ENCODE measurements at regions of chr7 and their contacts with region 1.

Region 1: DNA sequence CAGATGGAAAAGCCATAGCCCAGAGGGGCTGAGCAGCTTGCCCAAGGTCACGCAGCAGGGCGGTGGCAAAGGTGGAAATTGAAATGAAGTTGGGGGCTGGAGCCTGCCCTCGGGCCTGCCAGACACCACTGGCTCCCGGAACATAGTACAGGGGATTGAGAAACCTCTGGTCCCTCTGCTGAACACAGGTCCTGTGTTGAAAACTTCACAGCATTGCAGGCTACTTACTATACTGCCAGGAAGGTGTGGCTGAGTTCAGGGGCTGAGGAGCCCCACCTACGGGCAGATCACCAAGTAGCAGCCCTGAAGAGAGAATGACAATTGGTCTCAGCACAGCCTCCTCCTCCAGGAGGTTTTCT is 326.7 kb downstream of the PLXNA4 start:
- DNase-seq: peak; percentile 6
- H3K4me3 ChIP-seq: no peak overlapping the region
- H3K27ac ChIP-seq: no peak overlapping the region
- H3K4me1 ChIP-seq: peaks cover 18% of the 10 kb centered on the region
- H3K27me3 ChIP-seq: no peaks in the 10 kb centered on the region
- CTCF ChIP-seq: peak; percentile 27 to 56

Region 2: DNA sequence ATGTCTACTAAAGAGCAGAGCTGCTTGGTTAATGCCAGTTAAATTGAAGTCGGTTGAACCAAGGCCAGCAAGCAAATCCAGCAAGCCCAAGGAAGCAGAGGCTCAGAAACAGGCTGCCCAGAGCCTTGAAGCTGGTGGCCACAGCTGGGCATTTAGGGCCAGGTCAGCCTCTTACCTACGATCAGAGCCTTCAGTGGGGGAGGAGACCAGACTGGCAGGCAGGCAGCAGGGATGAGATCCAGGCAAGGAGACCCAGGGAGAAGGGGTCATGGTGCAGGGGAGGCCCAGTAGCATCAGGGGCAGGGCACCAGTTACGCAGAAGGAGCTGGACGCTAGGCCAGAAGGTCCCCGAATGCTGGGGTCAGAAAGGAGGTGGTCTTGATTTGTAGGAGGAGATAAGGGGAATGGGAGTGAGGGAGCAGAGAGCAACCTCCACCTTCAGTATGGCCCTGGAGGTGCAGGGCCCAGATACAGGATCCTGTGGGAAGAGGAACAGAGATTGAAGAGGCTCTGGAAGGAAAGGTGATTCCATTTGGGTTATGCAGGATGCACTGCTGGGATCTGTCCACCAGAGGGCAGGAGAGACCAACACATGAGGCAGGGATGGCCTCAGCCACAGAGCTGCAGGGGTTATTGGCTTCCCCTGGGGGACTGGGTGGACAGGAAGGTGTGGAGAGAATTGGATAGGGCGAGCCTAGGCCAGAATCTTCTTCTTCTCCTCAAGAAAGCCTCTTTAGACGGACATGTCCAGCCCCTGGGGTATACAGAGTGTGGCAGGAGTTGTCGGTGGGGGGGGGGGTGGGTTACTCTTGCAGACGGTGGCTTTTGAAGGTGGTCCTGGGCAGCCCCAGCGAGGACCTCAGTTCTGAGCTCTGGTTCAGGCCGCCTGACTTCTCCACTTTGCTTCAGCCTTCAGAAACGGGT is 560.6 kb before region 1 on chr7:
- CTCF ChIA-PET with region 1: no interaction called
- dilution Hi-C with region 1: no loop called
- in situ Hi-C with region 1: no loop called
- intact Hi-C with region 1: loop called (anchors 1 kb)
- DNase-seq: peak; percentile 31
- H3K4me3 ChIP-seq: no peak overlapping the region
- H3K27ac ChIP-seq: no peak overlapping the region
- H3K4me1 ChIP-seq: peaks cover 3% of the 10 kb centered on the region
- H3K27me3 ChIP-seq: no peaks in the 10 kb centered on the region
- CTCF ChIP-seq: peak; percentile 96

Region 3: GRCh38 chr7:131753620-131754222 is 495.9 kb before region 1 on chr7:
- CTCF ChIA-PET with region 1: no interaction called
- dilution Hi-C with region 1: no loop called
- in situ Hi-C with region 1: no loop called
- intact Hi-C with region 1: loop called (anchors 5 kb)
- DNase-seq: no peak
- H3K4me3 ChIP-seq: no peak overlapping the region
- H3K27ac ChIP-seq: no peak overlapping the region
- H3K4me1 ChIP-seq: no peaks in the 10 kb centered on the region
- H3K27me3 ChIP-seq: peaks cover 6% of the 10 kb centered on the region
- CTCF ChIP-seq: peak; percentile 36 to 78

Region 4: DNA sequence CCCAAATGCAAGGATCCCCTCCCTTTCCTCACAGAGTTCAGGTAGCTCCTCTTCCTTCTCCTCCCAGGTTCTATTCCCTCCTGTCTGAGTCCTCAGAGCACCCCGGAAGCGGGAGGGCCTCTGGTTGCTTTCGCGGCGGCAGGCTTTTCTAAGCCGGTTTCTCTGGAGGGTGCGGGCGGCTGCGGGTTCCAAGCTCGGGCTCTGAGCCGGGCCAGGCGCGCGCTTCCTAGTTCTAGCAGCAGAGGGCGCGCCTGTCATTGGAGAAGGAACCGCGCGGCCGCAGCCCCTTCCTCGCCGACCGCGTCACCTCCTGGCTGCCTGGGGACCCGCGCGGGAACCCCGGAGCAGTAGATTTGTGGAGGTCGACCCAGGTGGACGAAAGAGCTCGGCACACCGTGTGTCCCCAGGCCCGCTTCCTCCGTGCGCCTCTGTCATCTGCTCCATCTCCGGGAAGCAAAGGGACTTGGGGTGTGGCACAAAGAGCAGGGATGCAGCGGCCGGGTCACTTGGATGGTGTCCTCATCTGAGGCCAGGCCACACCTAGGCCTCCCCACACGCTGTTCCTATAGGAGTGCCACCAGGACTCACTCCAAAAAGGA is 304.2 kb before region 1 on chr7:
- CTCF ChIA-PET with region 1: no interaction called
- dilution Hi-C with region 1: no loop called
- in situ Hi-C with region 1: loop called (anchors 10 kb)
- intact Hi-C with region 1: loop called (anchors 1 kb)
- DNase-seq: peak; percentile 12
- H3K4me3 ChIP-seq: no peak overlapping the region
- H3K27ac ChIP-seq: no peak overlapping the region
- H3K4me1 ChIP-seq: peaks cover 5% of the 10 kb centered on the region
- H3K27me3 ChIP-seq: no peaks in the 10 kb centered on the region
- CTCF ChIP-seq: peak; percentile 50 to 86

Region 5: GRCh38 chr7:132049462-132050304 is 199.9 kb before region 1 on chr7:
- CTCF ChIA-PET with region 1: no interaction called
- dilution Hi-C with region 1: no loop called
- in situ Hi-C with region 1: no loop called
- intact Hi-C with region 1: loop called (anchors 5 kb)
- DNase-seq: no peak
- H3K4me3 ChIP-seq: peak overlapping the region in 2 of 3 experiments; percentile 5 to 6
- H3K27ac ChIP-seq: no peak overlapping the region
- H3K4me1 ChIP-seq: no peaks in the 10 kb centered on the region
- H3K27me3 ChIP-seq: no peaks in the 10 kb centered on the region
- CTCF ChIP-seq: peak; percentile 75 to 76

Region 6: GRCh38 chr7:132183781-132184420 is 65.7 kb before region 1 on chr7:
- CTCF ChIA-PET with region 1: no interaction called
- dilution Hi-C with region 1: loop called (anchors 5 kb)
- in situ Hi-C with region 1: no loop called
- intact Hi-C with region 1: no loop called
- DNase-seq: no peak
- H3K4me3 ChIP-seq: no peak overlapping the region
- H3K27ac ChIP-seq: no peak overlapping the region
- H3K4me1 ChIP-seq: no peaks in the 10 kb centered on the region
- H3K27me3 ChIP-seq: no peaks in the 10 kb centered on the region
- CTCF ChIP-seq: no peak

Measured in mammary epithelial cell (primary cell).